Panc1 (cell line): ENCODE measurements at regions of chr15 and their contacts with region 1.

Region 1: DNA sequence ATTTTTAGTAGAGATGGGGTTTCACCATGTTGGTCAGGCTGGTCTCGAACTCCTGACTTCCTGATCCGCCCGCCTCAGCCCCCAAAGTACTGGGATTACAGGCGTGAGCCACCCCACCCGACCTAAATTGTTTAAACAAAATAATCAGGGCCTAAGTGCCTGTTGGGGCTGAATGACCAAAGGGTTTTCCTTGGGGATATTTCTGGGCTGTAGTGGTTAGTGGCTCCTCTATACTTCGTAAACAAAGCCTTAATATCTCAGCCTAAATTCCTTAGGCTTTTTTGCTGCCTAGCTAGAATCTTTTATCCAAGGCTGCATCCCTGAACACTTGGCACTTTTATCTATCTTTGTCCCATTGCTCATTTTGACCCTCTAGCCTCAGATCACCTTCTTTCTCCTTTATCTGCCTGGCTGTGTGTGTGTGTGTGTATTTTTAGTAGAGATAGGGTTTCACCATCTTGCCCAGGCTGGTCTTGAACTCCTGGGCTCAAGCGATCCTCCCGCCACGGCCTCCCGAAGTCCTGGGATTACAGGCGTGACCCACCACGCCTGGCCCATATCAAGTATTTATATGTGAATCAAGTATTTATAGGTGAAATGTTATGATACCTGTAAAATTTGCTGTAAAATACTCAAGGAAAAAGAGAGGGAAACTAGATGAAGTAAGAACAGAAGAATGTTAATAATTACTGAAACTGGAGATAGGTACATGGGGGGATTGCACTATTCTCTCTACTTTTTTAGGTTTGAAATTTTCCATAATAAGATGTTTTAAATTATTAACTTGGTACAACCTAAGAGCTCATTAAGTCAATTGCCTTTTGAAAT is 1.8 kb downstream of the NUSAP1 start:
- DNase-seq: no peak
- ATAC-seq: no peak
- H3K4me3 ChIP-seq: peak overlapping the region; percentile 68 to 88
- H3K27ac ChIP-seq: peak overlapping the region; percentile 18
- H3K4me1 ChIP-seq: peaks cover 12% of the 10 kb centered on the region
- H3K27me3 ChIP-seq: no peaks in the 10 kb centered on the region
- CTCF ChIP-seq: no peak

Region 2: DNA sequence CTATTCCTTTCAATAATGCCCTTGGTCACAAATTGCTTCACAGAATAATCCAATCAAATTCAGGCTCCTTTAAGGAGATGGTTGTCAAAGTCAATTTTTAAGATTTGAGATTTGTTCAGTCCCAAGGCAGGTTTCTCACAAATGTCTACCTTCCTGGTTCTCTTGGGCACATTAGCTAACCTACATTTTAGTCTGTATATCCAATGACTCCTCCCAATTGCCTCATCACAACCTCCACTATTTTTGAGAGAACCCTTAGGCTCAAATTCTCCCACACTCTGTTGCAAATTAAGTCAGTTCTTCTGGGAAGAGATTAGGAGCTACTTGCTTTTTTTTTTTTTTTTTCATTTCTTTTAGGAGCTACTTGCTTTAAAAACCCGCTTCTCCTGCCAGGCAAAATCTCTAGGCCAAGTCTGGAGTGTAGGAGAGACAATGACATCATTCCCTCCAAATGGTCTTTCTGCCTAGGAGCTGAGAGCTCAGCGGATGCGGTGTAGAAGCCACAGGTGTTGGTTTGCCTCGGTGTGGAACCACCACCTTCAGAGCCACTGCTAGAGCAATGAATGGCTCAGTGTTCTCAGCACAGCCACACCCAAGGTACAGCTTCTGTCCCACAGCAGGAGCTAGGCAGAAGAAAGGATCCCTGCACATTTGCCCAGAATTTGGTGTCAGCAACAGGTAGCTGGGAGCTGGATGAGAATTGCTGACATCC is 208.4 kb before region 1 on chr15:
- CTCF ChIA-PET with region 1: no interaction called
- POLR2A ChIA-PET with region 1: interaction called, 12 read pairs
- in situ Hi-C with region 1: no loop called
- intact Hi-C with region 1: no loop called
- DNase-seq: no peak
- ATAC-seq: no peak
- H3K4me3 ChIP-seq: no peak overlapping the region
- H3K27ac ChIP-seq: no peak overlapping the region
- H3K4me1 ChIP-seq: no peaks in the 10 kb centered on the region
- H3K27me3 ChIP-seq: no peaks in the 10 kb centered on the region
- CTCF ChIP-seq: no peak

Region 3: DNA sequence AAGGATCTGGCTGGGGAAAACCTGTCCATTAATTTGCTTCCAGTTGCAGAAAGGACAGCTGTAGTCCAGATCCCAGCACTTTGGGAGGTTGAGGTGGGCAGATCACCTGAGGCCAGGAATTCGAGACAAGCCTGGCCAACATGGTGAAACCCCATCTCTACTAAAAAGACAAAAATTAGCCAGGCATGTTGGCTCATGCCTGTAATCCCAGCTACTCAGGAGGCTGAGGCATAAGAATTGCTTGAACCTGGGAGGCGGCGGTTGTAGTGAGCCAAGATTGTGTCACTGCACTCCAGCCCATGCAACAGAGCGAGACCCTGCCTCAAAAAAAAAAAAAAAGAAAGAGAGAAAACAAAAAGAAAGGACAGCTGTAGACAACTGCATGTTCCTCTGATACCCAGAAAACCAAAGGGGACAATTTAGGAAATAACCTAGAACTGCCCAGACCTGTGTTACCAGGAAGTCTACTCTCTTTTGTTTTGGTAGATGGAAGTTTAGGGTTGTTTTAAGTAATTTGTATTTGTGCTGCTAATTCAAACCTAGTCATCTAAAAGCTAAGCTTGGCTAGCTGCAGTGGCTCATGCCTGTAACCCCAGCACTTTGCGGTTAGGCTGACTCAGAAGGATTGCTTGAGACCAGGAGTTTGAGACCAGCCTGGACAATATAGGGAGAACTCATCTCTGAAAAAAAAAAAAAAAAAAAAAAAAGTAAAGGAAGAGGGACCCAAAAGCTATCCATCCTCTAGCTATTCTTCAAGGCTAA is 126.6 kb before region 1 on chr15:
- CTCF ChIA-PET with region 1: no interaction called
- POLR2A ChIA-PET with region 1: no interaction called
- in situ Hi-C with region 1: no loop called
- intact Hi-C with region 1: no loop called
- DNase-seq: no peak
- ATAC-seq: no peak
- H3K4me3 ChIP-seq: no peak overlapping the region
- H3K27ac ChIP-seq: no peak overlapping the region
- H3K4me1 ChIP-seq: no peaks in the 10 kb centered on the region
- H3K27me3 ChIP-seq: no peaks in the 10 kb centered on the region
- CTCF ChIP-seq: no peak

Region 4: GRCh38 chr15:41323611-41324010 is 10.9 kb before region 1 on chr15:
- CTCF ChIA-PET with region 1: no interaction called
- POLR2A ChIA-PET with region 1: no interaction called
- in situ Hi-C with region 1: no loop called
- intact Hi-C with region 1: no loop called
- DNase-seq: no peak
- ATAC-seq: no peak
- H3K4me3 ChIP-seq: no peak overlapping the region
- H3K27ac ChIP-seq: no peak overlapping the region
- H3K4me1 ChIP-seq: no peaks in the 10 kb centered on the region
- H3K27me3 ChIP-seq: no peaks in the 10 kb centered on the region
- CTCF ChIP-seq: no peak

Region 5: DNA sequence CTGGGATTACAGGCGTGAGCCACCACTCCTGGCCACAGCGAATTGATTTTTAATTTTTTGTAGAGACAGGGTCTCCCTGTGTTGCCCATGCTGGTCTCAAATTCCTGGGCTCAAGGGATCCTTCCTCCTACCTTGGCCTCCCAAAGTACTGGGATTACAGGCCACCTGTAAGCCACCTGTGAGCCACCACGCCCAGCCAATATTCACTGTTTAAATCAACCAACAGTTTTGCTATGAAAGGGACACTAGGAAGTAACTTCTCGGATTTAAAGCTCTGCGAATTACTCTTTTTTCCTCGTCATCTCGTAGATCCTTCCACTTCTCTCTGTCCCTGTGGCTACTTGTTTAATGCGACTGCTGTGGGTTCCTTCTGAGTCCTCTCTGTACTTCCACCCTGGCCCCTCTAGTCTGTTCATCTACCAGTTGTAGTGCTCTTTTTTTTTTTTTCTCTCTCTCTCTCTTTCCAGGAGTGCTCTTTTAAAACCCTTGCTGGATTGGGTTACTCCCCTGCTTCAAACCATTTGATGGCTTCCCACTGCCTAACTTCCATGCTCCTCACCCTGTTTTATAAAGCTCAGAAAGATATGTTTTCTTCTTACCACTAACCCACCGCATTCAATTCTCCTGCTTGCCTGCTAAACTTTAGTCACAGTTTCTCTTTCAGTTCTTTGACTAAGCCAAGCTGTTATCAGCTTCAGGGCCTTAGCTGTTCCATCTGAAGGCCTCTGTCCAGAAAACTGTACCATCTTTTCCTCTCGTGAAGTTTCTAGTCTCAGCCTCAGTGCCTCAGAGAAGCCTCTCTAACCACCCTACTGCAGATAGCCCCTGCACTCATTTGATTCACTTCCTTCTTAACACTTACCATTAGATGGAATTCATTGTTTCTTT is 94.7 kb after region 1 on chr15:
- CTCF ChIA-PET with region 1: no interaction called
- POLR2A ChIA-PET with region 1: interaction called, 10 read pairs
- in situ Hi-C with region 1: no loop called
- intact Hi-C with region 1: no loop called
- DNase-seq: no peak
- ATAC-seq: no peak
- H3K4me3 ChIP-seq: no peak overlapping the region
- H3K27ac ChIP-seq: no peak overlapping the region
- H3K4me1 ChIP-seq: no peaks in the 10 kb centered on the region
- H3K27me3 ChIP-seq: no peaks in the 10 kb centered on the region
- CTCF ChIP-seq: no peak

Region 6: GRCh38 chr15:41734079-41734478 is 399.6 kb after region 1 on chr15:
- CTCF ChIA-PET with region 1: no interaction called
- POLR2A ChIA-PET with region 1: no interaction called
- in situ Hi-C with region 1: no loop called
- intact Hi-C with region 1: no loop called
- DNase-seq: no peak
- ATAC-seq: no peak
- H3K4me3 ChIP-seq: no peak overlapping the region
- H3K27ac ChIP-seq: no peak overlapping the region
- H3K4me1 ChIP-seq: no peaks in the 10 kb centered on the region
- H3K27me3 ChIP-seq: no peaks in the 10 kb centered on the region
- CTCF ChIP-seq: no peak